Common myeloid progenitor, CD34-positive (primary cell): ENCODE measurements at regions of chr9 and their contacts with region 1.

Region 1: GRCh38 chr9:76393963-76394679 is at the start of gene RFK:
- DNase-seq: peak; percentile 94 to 97 (median 96)
- H3K4me3 ChIP-seq: peak within 1 kb of the TSS; percentile 83 to 95 (median 92)
- H3K27ac ChIP-seq: peak within 1 kb of the TSS; percentile 87 to 96
- H3K4me1 ChIP-seq: peaks cover 11 to 32% (median 20%) of the 10 kb centered on the region in 4 experiments
- H3K27me3 ChIP-seq: no peaks in the 10 kb centered on the region

Region 2: GRCh38 chr9:76359365-76359764 is 34.8 kb before region 1 on chr9:
- CTCF ChIA-PET with region 1: interaction called, 10 read pairs
- POLR2A ChIA-PET with region 1: no interaction called
- DNase-seq: peak in 2 of 3 donors; percentile 45 to 70
- H3K4me3 ChIP-seq: no peak overlapping the region
- H3K27ac ChIP-seq: peak overlapping the region in 1 of 2 experiments; percentile 64
- H3K4me1 ChIP-seq: peaks cover 0 to 4% (median 0%) of the 10 kb centered on the region in 4 experiments
- H3K27me3 ChIP-seq: no peaks in the 10 kb centered on the region

Region 3: DNA sequence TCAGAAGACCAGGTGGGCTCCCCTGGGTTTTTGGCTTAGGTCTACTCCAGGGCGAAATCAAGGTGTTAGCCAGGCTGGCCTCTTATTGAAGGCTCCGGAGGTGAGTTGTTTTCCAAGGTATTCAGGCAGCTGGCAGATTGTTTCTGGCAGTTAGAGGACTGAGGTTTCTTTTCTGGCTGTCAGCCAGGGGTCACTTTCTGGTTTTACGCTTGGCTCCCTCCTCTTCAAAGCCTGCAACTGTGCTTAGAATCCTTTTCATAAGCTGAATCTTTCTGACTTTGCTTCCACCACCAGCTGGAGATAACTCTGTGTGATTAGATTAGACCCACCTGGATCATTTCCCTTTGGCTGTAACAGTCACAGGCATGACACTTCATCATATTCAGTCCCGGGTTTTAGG is 24.5 kb before region 1 on chr9:
- CTCF ChIA-PET with region 1: interaction called, 15 read pairs
- POLR2A ChIA-PET with region 1: no interaction called
- DNase-seq: peak in 2 of 3 donors; percentile 33 to 42
- H3K4me3 ChIP-seq: no peak overlapping the region
- H3K27ac ChIP-seq: no peak overlapping the region
- H3K4me1 ChIP-seq: peaks cover 0 to 8% (median 4%) of the 10 kb centered on the region in 4 experiments
- H3K27me3 ChIP-seq: no peaks in the 10 kb centered on the region

Region 4: DNA sequence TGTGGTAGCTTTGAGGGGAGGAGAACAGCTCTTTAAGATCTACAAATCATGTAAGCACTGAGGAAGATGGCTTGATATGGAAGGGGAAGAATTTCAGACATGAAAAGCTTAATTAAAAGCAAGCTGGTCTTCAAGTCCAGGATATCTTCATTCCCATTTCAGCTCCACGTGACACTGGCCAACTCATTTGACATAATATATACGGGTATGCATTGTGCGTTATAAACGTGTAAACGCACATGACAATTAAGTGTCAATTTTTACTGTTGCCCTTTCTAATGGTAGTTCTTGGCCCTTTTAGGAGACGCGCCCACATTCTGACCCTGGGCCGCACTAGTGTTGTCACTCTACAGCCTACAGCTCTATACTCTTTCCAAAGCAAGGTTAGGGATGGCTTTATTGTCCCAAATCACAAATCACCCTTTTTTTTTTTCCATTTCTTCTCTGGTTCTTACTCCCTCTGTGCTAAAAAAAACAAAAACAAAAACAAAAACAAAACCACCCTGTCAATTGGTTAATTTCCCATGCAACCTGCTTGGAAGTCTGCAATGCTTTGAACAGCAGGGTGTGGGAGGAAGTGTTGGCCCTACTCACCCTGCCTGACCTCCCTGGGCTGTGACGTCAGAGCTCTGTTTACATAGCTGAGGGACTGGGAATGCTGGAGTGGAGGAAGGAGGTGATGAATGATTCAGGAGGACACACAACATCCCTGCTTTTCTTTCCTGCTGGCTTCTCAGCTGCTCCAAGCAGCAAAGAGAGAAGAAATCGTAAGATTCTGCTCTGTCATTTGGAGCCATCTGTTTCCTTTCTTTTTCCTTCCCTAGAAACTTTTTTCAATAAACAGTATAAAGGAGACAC is 19.2 kb before region 1 on chr9:
- CTCF ChIA-PET with region 1: interaction called, 15 read pairs
- POLR2A ChIA-PET with region 1: interaction called, 4 read pairs
- DNase-seq: peak in 2 of 3 donors; percentile 64 to 77
- H3K4me3 ChIP-seq: peak overlapping the region in 1 of 7 experiments; percentile 12
- H3K27ac ChIP-seq: no peak overlapping the region
- H3K4me1 ChIP-seq: peaks cover 0 to 17% (median 12%) of the 10 kb centered on the region in 4 experiments
- H3K27me3 ChIP-seq: no peaks in the 10 kb centered on the region